Transverse colon (tissue), 4 donors: ENCODE measurements at regions of chr18 and their contacts with region 1.

Region 1: DNA sequence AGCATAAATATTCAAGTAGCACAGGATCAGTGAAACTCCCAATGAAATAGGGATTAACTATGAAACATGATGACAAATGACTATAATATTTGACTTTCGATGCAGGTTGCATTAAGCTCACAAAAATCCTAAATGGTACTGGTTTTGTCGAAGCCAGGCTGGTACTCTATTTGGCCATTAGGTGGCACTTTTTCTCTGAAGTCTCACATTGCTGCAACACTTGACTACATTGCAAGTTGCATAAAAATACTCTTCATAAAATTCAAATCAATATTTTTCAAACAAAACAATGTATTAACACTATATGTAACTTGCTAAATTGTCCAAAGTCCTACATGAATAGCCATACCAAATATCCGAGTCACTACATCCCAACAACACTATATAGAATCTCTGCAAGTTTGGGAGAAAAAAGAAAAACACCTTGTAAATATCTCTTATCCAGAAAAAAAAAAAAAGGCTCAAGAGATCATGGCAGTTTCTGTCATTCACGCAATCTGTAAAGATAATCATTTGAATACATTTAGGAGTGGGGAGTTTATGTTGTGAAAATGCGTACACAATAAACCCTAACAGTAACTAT is 9.5 kb downstream of the RTTN start:
- DNase-seq: peak; percentile 9
- H3K4me3 ChIP-seq: no peak overlapping the region
- H3K27ac ChIP-seq: no peak overlapping the region
- H3K4me1 ChIP-seq: no peaks in the 10 kb centered on the region
- H3K27me3 ChIP-seq: no peaks in the 10 kb centered on the region
- CTCF ChIP-seq: peak; percentile 75 to 79 (median 77)
- EP300 ChIP-seq: no peak
- POLR2A ChIP-seq: no peak

Region 2: GRCh38 chr18:69371729-69372128 is 824.2 kb before region 1 on chr18:
- in situ Hi-C with region 1: no loop called
- intact Hi-C with region 1: no loop called
- DNase-seq: no peak
- H3K4me3 ChIP-seq: no peak overlapping the region
- H3K27ac ChIP-seq: no peak overlapping the region
- H3K4me1 ChIP-seq: no peaks in the 10 kb centered on the region
- H3K27me3 ChIP-seq: no peaks in the 10 kb centered on the region
- CTCF ChIP-seq: no peak
- EP300 ChIP-seq: no peak
- POLR2A ChIP-seq: no peak

Region 3: GRCh38 chr18:70428439-70428838 is 232.5 kb after region 1 on chr18:
- in situ Hi-C with region 1: loop called in 2 of 4 experiments (anchors 5 kb)
- intact Hi-C with region 1: loop called (anchors 5 kb)
- DNase-seq: no peak
- H3K4me3 ChIP-seq: no peak overlapping the region
- H3K27ac ChIP-seq: no peak overlapping the region
- H3K4me1 ChIP-seq: peaks cover 0 to 4% (median 0%) of the 10 kb centered on the region in 4 donors
- H3K27me3 ChIP-seq: no peaks in the 10 kb centered on the region
- CTCF ChIP-seq: no peak
- EP300 ChIP-seq: no peak
- POLR2A ChIP-seq: no peak

Region 4: GRCh38 chr18:70448588-70448987 is 252.6 kb after region 1 on chr18:
- in situ Hi-C with region 1: loop called in 1 of 4 experiments (anchors 5 kb)
- intact Hi-C with region 1: no loop called
- DNase-seq: no peak
- H3K4me3 ChIP-seq: no peak overlapping the region
- H3K27ac ChIP-seq: no peak overlapping the region
- H3K4me1 ChIP-seq: no peaks in the 10 kb centered on the region
- H3K27me3 ChIP-seq: no peaks in the 10 kb centered on the region
- CTCF ChIP-seq: no peak
- EP300 ChIP-seq: no peak
- POLR2A ChIP-seq: no peak